Activated CD4-positive, alpha-beta T cell treated with anti-CD3 and anti-CD28 coated beads for 36 hours (primary cell): ENCODE measurements at regions of chr20 and their contacts with region 1.

Region 1: DNA sequence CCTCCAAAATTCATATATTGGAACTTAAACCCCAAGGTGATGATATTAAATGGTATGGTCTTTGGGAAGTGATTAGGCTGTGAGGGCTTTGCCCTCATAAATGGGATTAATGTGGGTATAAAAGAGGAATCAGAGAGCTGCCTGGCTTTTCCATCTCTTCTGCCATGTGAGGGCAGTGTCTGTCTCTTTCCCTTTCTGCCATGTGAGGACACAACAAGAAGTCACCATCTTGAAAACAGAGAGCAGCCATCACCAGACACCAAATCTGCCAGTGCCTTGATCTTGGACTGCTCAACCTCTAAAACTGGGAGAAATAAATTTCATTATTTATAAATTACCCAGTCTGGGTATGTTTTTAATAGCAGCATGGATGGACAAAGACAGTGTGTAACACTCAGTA is 263.0 kb downstream of the PAX1 start:
- DNase-seq: no peak
- ATAC-seq: no peak
- H3K4me3 Mint-ChIP-seq: no peak overlapping the region
- H3K27ac Mint-ChIP-seq: no peak overlapping the region
- H3K4me1 Mint-ChIP-seq: no peaks in the 10 kb centered on the region
- H3K27me3 Mint-ChIP-seq: no peaks in the 10 kb centered on the region

Region 2: DNA sequence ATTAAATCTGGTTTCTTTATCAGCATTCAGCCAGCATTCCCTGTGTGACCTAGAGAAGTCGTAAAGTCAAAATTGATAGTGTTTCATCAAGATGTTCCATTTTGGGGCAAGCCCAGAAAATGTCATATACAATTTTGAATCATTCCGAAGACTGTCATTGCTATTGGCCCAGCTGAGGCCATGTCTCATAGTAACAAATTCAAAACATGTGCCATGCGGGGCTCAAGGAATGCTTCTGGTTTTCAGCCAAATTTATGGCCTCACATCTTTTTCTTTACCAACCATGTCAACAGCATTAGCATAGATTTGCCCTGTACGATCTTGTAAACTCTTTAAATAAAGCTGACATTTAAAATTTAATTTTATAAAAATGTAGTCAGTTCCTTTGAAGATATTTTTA is 51.7 kb after region 1 on chr20:
- CTCF ChIA-PET with region 1: no interaction called
- POLR2A ChIA-PET with region 1: no interaction called
- intact Hi-C with region 1: loop called in 1 of 2 experiments (anchors 10 kb)
- DNase-seq: no peak
- ATAC-seq: no peak
- H3K4me3 Mint-ChIP-seq: no peak overlapping the region
- H3K27ac Mint-ChIP-seq: no peak overlapping the region
- H3K4me1 Mint-ChIP-seq: no peaks in the 10 kb centered on the region
- H3K27me3 Mint-ChIP-seq: no peaks in the 10 kb centered on the region